ENCODE measurements at regions of chr16 and their contacts with region 1.

Region 1: DNA sequence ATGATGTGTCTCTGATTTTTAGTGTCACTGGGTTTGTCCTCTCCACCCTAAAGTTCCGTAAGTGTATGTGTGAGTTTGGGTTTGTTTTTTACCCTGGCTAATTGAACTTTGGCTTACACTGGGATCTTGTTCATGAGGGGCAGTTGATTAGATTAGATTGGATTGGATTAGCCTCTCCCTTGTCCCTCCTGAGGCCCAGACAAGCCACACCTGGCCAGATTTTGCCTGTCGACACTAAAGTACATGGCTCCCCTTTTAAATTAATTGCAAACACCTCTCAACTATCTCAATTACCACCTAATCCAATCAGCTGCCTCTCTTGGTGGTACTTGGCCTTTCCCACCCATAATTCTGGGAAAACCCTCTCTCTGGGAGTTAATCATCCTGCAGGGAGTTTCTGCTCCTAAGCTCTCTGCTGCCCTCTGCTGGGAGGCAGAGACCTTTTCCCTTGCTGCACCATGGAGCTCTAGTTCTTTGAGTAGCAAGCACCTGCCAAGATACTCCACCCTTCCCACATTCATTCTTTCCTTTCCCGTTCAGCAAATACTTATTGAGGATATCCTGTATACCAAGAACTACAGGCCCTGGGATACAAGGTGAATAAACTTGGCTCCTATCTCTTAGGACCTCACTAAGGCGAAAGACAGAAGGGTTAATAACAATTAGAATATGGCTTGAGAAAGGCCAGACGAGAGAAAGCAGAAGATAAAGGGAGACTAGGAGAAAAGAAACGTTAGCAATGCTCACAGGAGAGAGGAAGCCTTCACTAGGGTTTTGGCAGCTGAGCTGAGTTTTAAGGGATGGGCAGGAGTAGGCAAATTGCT is 60.0 kb upstream of the MPHOSPH6 start:
- DNase-seq: peak; percentile 57 to 72
- ATAC-seq: peak in 2 of 4 donors; percentile 67
- H3K4me3 ChIP-seq: no peak overlapping the region
- H3K27ac ChIP-seq: no peak overlapping the region
- H3K4me1 ChIP-seq: no peaks in the 10 kb centered on the region
- H3K27me3 ChIP-seq: peaks cover 0 to 6% (median 4%) of the 10 kb centered on the region in 3 donors
- CTCF ChIP-seq: peak; percentile 91

Region 2: DNA sequence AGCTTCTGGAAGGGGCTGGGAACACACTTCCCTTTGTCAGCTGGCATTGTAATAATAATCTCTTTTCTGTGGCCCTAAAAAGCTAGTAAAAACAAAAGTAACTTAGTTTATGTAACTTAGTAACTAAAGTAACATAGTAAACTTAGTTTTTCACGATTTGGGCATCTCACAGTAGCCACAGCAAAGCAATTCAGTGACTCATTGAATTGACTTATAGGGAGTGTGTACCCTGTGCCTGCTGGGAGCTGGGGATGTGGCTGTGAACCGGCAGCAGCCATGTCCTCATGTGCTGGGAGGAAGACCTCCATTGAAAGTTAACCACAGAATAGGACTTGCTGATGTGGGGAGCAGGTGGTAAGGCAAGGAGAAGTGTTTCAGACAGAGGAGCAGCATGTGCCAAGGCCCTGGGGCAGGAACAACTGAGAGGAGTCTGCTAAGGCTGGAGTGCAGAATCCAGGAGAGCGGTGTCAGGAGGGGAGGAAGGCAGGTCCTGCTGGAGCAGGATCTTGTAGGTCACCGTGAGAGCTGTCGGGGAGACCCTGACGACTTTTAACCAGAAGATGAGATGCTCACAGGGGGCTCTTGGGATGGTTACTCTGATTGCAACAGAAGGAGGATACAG is 338.2 kb before region 1 on chr16:
- intact Hi-C with region 1: loop called (anchors 2 kb)
- DNase-seq: no peak
- ATAC-seq: no peak
- H3K4me3 ChIP-seq: no peak overlapping the region
- H3K27ac ChIP-seq: no peak overlapping the region
- H3K4me1 ChIP-seq: no peaks in the 10 kb centered on the region
- H3K27me3 ChIP-seq: no peaks in the 10 kb centered on the region
- CTCF ChIP-seq: no peak

Region 3: DNA sequence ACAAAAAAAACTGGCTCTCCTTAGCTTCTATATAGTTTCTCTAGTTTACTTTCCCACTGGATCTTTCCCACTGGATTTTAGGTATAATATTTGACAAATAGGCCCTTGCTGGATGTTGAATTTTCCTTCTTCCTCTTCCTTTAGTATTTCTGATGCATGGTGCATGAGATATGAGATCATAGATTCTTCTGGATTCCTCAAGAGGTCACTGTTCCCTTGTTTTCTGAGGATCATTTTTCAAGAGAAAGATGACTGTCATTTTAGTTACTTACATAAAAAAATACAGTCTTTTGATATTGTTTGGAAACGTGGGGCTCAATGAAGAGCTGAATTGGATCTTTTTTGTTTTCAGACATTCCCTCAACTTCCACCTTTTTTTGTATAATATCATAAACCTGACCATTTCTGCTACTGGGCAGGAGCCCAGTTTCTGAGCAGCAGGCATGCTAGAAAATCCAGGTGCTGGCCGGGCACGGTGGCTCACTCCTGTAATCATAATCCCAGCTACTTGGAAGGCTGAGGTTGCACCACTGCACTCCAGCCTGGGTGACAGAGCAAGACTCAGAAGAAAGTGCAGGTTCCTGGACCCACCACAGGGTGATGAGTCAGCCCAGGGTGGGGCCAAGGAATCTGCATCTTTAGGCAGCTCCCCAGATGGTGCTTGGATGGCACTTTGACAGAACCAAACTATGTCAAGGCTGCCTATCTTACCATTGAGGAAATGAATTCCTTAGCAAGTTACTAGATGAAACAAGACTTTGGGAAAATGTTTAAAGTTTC is 289.0 kb before region 1 on chr16:
- intact Hi-C with region 1: loop called (anchors 2 kb)
- DNase-seq: no peak
- ATAC-seq: no peak
- H3K4me3 ChIP-seq: no peak overlapping the region
- H3K27ac ChIP-seq: no peak overlapping the region
- H3K4me1 ChIP-seq: no peaks in the 10 kb centered on the region
- H3K27me3 ChIP-seq: peaks cover 0 to 3% (median 0%) of the 10 kb centered on the region in 3 donors
- CTCF ChIP-seq: peak; percentile 20

Region 4: DNA sequence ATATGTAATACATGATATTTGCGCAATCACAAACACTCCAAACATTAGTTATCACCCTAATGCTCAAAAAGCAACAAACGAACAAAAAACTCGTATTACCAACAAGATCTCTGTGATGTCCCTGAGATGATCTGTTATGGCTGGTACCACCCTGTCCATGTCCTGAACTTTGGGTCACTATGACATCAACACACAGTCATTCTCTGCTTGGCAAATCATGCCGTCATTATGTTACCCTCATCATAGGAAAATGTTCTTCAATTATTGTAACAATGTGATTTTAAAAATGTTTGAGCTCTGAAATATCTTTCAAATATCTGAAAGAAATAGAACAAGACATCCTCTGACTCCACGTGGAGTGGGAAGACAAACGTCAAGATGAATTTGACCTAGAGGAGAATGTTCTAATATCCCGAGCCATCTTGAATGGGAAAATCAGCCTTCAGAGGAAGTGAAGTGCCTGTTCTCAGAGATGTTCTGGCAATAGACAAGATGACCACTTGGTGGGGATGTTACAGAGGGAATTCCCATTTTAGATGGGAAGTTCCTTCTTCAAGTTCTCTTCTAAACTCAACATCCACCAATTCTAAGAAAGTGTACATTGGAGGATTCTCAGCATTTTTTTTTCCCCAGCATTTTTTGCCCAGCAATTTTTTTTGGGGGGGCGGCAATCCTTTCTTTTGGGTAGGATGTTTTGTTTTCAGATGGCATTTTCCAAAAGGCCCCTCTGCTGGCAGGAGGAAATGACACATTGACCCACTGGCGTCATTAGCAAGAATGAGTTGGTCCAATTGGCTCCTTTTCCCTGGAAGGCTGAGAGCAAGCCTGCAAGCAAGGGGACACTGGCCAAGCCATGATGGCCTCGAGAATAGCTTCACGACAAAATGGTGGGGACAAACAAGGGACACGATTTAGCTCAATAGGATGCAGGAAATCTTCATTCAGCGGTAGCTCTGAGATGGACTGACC is 198.6 kb before region 1 on chr16:
- intact Hi-C with region 1: loop called in 1 of 2 experiments (anchors 5 kb)
- DNase-seq: no peak
- ATAC-seq: no peak
- H3K4me3 ChIP-seq: no peak overlapping the region
- H3K27ac ChIP-seq: no peak overlapping the region
- H3K4me1 ChIP-seq: no peaks in the 10 kb centered on the region
- H3K27me3 ChIP-seq: no peaks in the 10 kb centered on the region
- CTCF ChIP-seq: peak; percentile 6